Adrenal gland (tissue), 19 donors: ENCODE measurements at regions of chr14 and their contacts with region 1.

Region 1: DNA sequence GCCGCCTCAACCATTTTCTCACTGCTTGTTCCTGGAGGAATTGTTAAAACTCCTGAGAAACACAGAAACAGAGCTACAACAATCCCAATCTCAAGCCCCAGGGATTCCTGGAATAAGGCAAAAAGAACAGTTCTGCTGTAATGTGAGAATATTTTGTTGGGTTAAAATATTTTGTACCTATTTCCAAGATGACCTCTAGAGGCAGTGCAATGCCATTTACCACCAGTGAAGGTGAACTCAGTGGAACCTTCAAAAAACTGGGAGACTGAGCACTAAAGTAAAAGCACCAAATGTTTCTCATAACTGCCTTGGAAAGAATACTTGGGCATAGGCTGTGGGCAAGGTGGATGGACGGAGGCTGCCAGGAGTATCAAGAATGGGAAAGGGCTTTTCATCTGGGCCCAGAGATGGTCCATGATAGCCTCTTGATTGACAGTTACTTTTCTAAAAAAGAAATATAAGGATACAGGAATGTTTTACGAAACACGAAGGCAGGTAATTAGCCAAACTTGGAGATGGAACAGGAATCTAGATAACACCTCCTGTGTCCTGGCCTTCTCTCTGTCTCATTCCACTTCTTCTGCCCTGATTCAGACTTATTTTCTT is 334.0 kb upstream of the FLRT2 start:
- DNase-seq: peak in 1 of 7 donors; percentile 26
- H3K4me3 ChIP-seq: no peak overlapping the region
- H3K27ac ChIP-seq: no peak overlapping the region
- H3K4me1 ChIP-seq: no peaks in the 10 kb centered on the region
- H3K27me3 ChIP-seq: no peaks in the 10 kb centered on the region
- CTCF ChIP-seq: peak; percentile 20 to 52 (median 48)
- POLR2A ChIP-seq: no peak

Region 2: DNA sequence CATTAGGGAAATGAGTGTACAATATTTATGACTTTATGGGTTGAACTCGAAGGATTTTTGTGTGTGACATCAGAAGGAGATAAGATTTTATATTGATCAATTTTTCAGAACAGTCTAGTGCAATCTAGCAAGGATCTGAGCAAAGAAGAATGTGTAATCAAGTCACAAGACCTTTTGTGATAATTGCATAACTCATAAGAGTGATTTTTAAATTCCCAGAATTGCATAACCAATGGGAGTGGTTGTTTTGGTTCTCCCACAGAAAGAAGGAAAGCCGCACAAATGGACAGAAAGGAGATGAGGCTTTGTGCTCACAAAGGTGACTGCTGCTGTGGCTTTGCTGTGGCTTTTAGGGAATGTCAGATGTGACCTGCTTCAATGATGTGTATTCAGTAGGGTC is 107.7 kb before region 1 on chr14:
- intact Hi-C with region 1: no loop called
- DNase-seq: no peak
- H3K4me3 ChIP-seq: no peak overlapping the region
- H3K27ac ChIP-seq: no peak overlapping the region
- H3K4me1 ChIP-seq: no peaks in the 10 kb centered on the region
- H3K27me3 ChIP-seq: no peaks in the 10 kb centered on the region
- CTCF ChIP-seq: no peak
- POLR2A ChIP-seq: no peak

Region 3: DNA sequence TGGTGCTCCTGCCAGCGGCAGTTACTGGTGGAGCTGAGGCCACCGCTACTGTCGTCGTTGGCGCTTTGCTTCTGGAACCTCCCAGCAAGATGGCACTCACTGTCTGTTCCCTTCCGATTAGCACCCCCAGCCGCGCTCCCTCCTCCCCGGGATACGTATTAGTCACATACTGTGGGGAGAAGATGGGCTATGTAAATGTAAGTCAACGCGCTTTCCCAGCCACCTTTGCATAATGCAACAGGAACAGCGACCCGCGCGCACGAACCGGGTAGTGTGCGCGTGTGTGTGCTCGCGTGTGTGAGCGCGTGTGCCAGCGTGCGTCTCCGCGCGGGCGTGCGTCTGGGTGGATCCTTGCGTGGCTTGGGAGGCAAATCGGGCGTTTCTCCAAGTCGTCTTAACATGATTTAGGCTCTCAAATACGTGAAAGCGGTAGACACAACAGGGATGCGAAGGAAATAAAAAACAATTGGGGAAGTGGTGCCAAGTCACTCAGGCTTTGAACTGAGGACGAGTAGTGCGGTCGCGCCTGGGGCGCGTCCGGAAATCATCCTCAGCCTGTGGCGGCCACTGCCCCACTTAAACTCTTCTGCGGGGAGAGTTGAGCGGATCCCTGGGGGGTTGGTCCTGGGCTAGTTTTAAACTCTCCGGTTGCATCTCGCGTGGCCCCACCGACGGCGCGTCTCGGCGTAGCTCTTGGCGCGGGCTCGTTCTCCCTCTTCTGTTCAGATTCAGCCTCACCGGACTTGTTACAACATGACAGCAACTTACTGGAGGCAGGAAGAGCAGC is 335.8 kb after region 1 on chr14:
- intact Hi-C with region 1: loop called in 1 of 2 experiments (anchors 10 kb)
- DNase-seq: peak; percentile 41 to 70 (median 63)
- H3K4me3 ChIP-seq: peak overlapping the region in 2 of 4 donors; percentile 20 to 65
- H3K27ac ChIP-seq: peak overlapping the region in 3 of 5 donors; percentile 36 to 83 (median 70)
- H3K4me1 ChIP-seq: peaks cover 0 to 36% of the 10 kb centered on the region in 2 donors
- H3K27me3 ChIP-seq: peaks cover 24% of the 10 kb centered on the region
- CTCF ChIP-seq: peak in 3 of 6 experiments; percentile 14 to 29 (median 16)
- POLR2A ChIP-seq: peak in 1 of 2 donors; percentile 30